ENCODE measurements at regions of chr5 and their contacts with region 1.

Region 1: GRCh38 chr5:141849375-141850243 is 28.6 kb downstream of the PCDH1 start:
- DNase-seq: peak; percentile 99
- H3K4me3 Mint-ChIP-seq: peak overlapping the region; percentile 48
- H3K27ac Mint-ChIP-seq: peak overlapping the region; percentile 93
- H3K4me1 Mint-ChIP-seq: peaks cover 53% of the 10 kb centered on the region
- H3K27me3 Mint-ChIP-seq: no peaks in the 10 kb centered on the region
- CTCF ChIP-seq: no peak

Region 2: GRCh38 chr5:141811287-141812155 is 38.1 kb before region 1 on chr5:
- CTCF ChIA-PET with region 1: interaction called, 4 read pairs
- intact Hi-C with region 1: loop called (anchors 1 kb)
- DNase-seq: peak; percentile 23
- H3K4me3 Mint-ChIP-seq: no peak overlapping the region
- H3K27ac Mint-ChIP-seq: no peak overlapping the region
- H3K4me1 Mint-ChIP-seq: no peaks in the 10 kb centered on the region
- H3K27me3 Mint-ChIP-seq: peaks cover 40% of the 10 kb centered on the region
- CTCF ChIP-seq: peak; percentile 70

Region 3: GRCh38 chr5:141866149-141867120 is 16.8 kb after region 1 on chr5:
- CTCF ChIA-PET with region 1: interaction called, 7 read pairs
- intact Hi-C with region 1: loop called (anchors 1 kb)
- DNase-seq: peak; percentile 99
- H3K4me3 Mint-ChIP-seq: peak overlapping the region; percentile 54
- H3K27ac Mint-ChIP-seq: peak overlapping the region; percentile 88
- H3K4me1 Mint-ChIP-seq: peaks cover 65% of the 10 kb centered on the region
- H3K27me3 Mint-ChIP-seq: no peaks in the 10 kb centered on the region
- CTCF ChIP-seq: no peak

Measured in Calu3 (cell line).